ENCODE measurements at regions of chr9 and their contacts with region 1.

Region 1: DNA sequence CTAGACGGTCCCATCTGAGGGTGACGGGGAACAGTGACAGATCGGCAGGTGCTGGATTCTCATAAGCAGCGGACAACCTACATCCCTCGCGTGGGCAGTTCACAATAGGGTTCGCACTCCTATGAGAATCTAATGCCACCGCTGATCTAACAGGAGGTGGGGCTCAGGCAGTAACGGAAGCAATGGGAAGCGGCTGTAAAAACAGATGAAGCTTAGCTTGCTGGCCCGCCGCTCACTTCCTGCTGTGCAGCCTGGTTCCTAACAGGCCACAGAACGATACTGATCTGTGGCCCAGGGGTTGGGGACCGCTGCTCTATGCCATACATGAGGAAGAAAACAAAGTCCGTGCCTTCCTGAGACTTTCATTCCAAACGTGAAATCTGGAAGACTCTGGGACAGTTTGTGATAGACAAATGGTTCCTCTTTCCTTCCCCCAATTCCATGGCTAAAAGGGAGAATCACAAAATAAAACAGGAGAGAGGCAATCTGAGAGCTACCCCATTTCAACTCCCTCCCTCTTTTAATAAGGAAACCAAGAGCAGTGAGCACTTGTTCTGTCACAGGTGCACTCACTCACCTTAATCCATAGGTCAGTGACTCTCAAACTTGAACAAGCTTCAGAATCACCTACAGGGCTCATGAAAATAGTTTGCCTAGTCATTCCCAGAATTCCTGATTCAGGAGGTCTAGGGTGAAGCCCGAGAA is 12.1 kb downstream of the PDCL start:
- DNase-seq: peak; percentile 21 to 74 (median 38)
- ATAC-seq: peak; percentile 95 to 98
- H3K4me3 Mint-ChIP-seq: peak overlapping the region; percentile 69 to 86 (median 76)
- H3K27ac Mint-ChIP-seq: peak overlapping the region; percentile 95 to 99 (median 97)
- H3K4me1 Mint-ChIP-seq: peaks cover 13 to 45% (median 34%) of the 10 kb centered on the region in 4 donors
- H3K27me3 Mint-ChIP-seq: no peaks in the 10 kb centered on the region

Region 2: GRCh38 chr9:122827761-122828093 is 11.4 kb after region 1 on chr9:
- POLR2A ChIA-PET with region 1: interaction called, 20 read pairs
- DNase-seq: no peak
- ATAC-seq: peak; percentile 6 to 16
- H3K4me3 Mint-ChIP-seq: peak overlapping the region; percentile 94 to 99 (median 98)
- H3K27ac Mint-ChIP-seq: peak overlapping the region; percentile 91 to 98 (median 97)
- H3K4me1 Mint-ChIP-seq: peaks cover 16 to 46% (median 42%) of the 10 kb centered on the region in 4 donors
- H3K27me3 Mint-ChIP-seq: no peaks in the 10 kb centered on the region

Region 3: GRCh38 chr9:122835313-122835731 is 19.0 kb after region 1 on chr9:
- POLR2A ChIA-PET with region 1: interaction called, 10 read pairs
- DNase-seq: peak in 5 of 10 donors; percentile 9 to 44 (median 20)
- ATAC-seq: peak; percentile 89 to 90
- H3K4me3 Mint-ChIP-seq: peak overlapping the region; percentile 59 to 90 (median 82)
- H3K27ac Mint-ChIP-seq: peak overlapping the region; percentile 79 to 94 (median 88)
- H3K4me1 Mint-ChIP-seq: peaks cover 15 to 22% (median 17%) of the 10 kb centered on the region in 4 donors
- H3K27me3 Mint-ChIP-seq: no peaks in the 10 kb centered on the region

Measured in naive thymus-derived CD8-positive, alpha-beta T cell (primary cell).